ENCODE measurements at regions of chr7 and their contacts with region 1.

Region 1: DNA sequence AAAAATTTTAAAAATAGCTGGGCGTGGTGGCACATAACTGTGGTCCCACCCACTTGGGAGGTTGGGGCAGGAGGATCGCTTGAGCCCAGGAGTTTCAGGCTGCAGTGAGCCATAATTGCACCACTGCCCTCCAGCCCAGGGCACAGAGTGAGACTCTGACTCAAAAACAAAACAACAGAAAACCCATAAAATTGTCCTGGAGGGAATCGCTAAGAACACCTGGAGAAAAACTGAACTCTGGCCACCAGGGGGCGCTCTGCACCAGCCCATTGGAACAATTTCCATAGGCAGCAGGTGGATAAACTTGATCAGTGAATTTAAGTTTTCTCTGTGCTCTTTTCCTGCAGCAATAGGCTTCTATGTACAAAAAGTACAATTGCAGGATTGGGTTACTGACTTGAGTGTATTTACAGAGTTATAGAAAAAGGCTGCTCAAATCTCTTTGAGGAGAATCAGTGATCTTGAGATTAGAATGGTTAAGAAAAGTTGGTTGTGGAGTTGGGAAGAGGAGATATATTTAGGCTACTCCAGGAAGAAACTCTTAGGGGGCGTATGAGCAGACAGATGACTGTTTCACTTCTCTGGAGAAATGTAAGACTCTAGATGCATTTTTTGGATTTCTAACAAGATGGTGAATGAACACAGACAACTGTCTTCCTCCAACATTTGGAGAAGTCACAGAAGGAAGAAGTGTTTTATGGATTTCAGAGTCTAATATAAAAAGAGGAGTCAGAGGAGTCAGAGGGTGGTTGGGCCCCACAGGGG is 274.9 kb upstream of the GALNT17 start:
- DNase-seq: peak; percentile 82
- H3K4me3 ChIP-seq: no peak overlapping the region
- H3K27ac ChIP-seq: no peak overlapping the region
- H3K4me1 ChIP-seq: no peaks in the 10 kb centered on the region
- H3K27me3 ChIP-seq: no peaks in the 10 kb centered on the region
- CTCF ChIP-seq: peak; percentile 84 to 86

Region 2: GRCh38 chr7:70829221-70830059 is 27.6 kb before region 1 on chr7:
- CTCF ChIA-PET with region 1: no interaction called
- dilution Hi-C with region 1: no loop called
- in situ Hi-C with region 1: no loop called
- intact Hi-C with region 1: loop called (anchors 1 kb)
- DNase-seq: peak; percentile 25
- H3K4me3 ChIP-seq: no peak overlapping the region
- H3K27ac ChIP-seq: no peak overlapping the region
- H3K4me1 ChIP-seq: no peaks in the 10 kb centered on the region
- H3K27me3 ChIP-seq: no peaks in the 10 kb centered on the region
- CTCF ChIP-seq: peak; percentile 90 to 91

Region 3: GRCh38 chr7:71705217-71705616 is 848.2 kb after region 1 on chr7:
- CTCF ChIA-PET with region 1: no interaction called
- dilution Hi-C with region 1: loop called (anchors 25 kb)
- in situ Hi-C with region 1: no loop called
- intact Hi-C with region 1: no loop called
- DNase-seq: no peak
- H3K4me3 ChIP-seq: no peak overlapping the region
- H3K27ac ChIP-seq: no peak overlapping the region
- H3K4me1 ChIP-seq: no peaks in the 10 kb centered on the region
- H3K27me3 ChIP-seq: no peaks in the 10 kb centered on the region
- CTCF ChIP-seq: no peak

Region 4: GRCh38 chr7:71723859-71724258 is 866.8 kb after region 1 on chr7:
- CTCF ChIA-PET with region 1: no interaction called
- dilution Hi-C with region 1: loop called (anchors 25 kb)
- in situ Hi-C with region 1: loop called in 1 of 2 experiments (anchors 10 kb)
- intact Hi-C with region 1: no loop called
- DNase-seq: no peak
- H3K4me3 ChIP-seq: no peak overlapping the region
- H3K27ac ChIP-seq: no peak overlapping the region
- H3K4me1 ChIP-seq: no peaks in the 10 kb centered on the region
- H3K27me3 ChIP-seq: no peaks in the 10 kb centered on the region
- CTCF ChIP-seq: no peak

Region 5: GRCh38 chr7:71733107-71733870 is 876.2 kb after region 1 on chr7:
- CTCF ChIA-PET with region 1: no interaction called
- dilution Hi-C with region 1: no loop called
- in situ Hi-C with region 1: loop called in 1 of 2 experiments (anchors 10 kb)
- intact Hi-C with region 1: loop called (anchors 1 kb)
- DNase-seq: peak; percentile 40
- H3K4me3 ChIP-seq: no peak overlapping the region
- H3K27ac ChIP-seq: no peak overlapping the region
- H3K4me1 ChIP-seq: no peaks in the 10 kb centered on the region
- H3K27me3 ChIP-seq: no peaks in the 10 kb centered on the region
- CTCF ChIP-seq: peak; percentile 64 to 84

Region 6: GRCh38 chr7:72622532-72622931 is 1765.5 kb after region 1 on chr7:
- CTCF ChIA-PET with region 1: no interaction called
- dilution Hi-C with region 1: no loop called
- in situ Hi-C with region 1: loop called in 1 of 2 experiments (anchors 25 kb)
- intact Hi-C with region 1: no loop called
- DNase-seq: no peak
- H3K4me3 ChIP-seq: no peak overlapping the region
- H3K27ac ChIP-seq: no peak overlapping the region
- H3K4me1 ChIP-seq: no peaks in the 10 kb centered on the region
- H3K27me3 ChIP-seq: no peaks in the 10 kb centered on the region
- CTCF ChIP-seq: no peak

Region 7: GRCh38 chr7:72785166-72785955 is 1928.3 kb after region 1 on chr7:
- CTCF ChIA-PET with region 1: no interaction called
- dilution Hi-C with region 1: no loop called
- in situ Hi-C with region 1: no loop called
- intact Hi-C with region 1: loop called (anchors 5 kb)
- DNase-seq: no peak
- H3K4me3 ChIP-seq: no peak overlapping the region
- H3K27ac ChIP-seq: no peak overlapping the region
- H3K4me1 ChIP-seq: peaks cover 6% of the 10 kb centered on the region
- H3K27me3 ChIP-seq: no peaks in the 10 kb centered on the region
- CTCF ChIP-seq: no peak